K562 (cell line): ENCODE measurements at regions of chr1 and their contacts with region 1.

Region 1: DNA sequence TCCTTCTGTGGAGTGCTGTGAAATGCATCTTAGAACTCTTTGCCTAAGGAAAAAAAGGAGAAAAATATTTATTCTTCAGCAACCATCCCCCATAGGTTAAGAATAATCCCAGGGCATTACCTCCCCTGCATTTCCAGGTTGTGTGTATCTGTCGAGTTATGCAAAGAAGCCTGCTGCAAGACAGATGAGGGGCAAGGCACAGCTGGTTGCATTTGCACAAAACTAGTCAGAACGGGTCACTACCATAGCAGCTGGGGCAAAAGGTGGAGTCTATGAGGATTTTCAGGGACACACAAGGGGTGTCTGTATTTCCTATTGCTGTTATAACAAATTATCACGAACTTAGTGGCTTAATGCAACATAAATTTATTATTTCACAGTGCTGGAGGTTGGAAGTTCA is 443.4 kb upstream of the C1orf87 start:
- DNase-seq: no peak
- ATAC-seq: no peak
- H3K4me3 ChIP-seq: no peak overlapping the region
- H3K27ac ChIP-seq: no peak overlapping the region
- H3K4me1 ChIP-seq: no peaks in the 10 kb centered on the region
- H3K27me3 ChIP-seq: no peaks in the 10 kb centered on the region
- CTCF ChIP-seq: no peak
- EP300 ChIP-seq: no peak
- POLR2A ChIP-seq: no peak
- RAD21 ChIP-seq: no peak

Region 2: DNA sequence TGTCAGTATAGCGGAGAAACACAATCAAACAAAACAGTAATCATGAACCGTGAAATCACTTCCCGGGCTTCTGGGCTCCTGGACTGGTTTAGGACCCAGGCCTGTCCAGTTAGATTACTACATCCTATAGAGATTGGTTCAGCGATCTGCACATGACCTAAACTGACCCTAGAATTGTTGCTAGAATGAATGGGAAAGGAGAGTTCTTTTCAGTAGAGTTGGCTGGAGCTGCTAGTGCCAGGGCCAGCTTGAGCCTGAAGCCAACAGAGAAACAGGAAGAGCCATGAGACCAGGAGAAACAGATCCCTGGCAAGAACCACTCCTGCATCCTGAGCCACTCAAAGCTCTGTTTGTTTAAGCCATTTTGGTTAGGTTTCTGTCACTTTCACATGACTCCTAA is 30.8 kb after region 1 on chr1:
- CTCF ChIA-PET with region 1: no interaction called
- POLR2A ChIA-PET with region 1: no interaction called
- in situ Hi-C with region 1: no loop called
- intact Hi-C with region 1: loop called (anchors 1 kb)
- DNase-seq: no peak
- ATAC-seq: no peak
- H3K4me3 ChIP-seq: no peak overlapping the region
- H3K27ac ChIP-seq: no peak overlapping the region
- H3K4me1 ChIP-seq: no peaks in the 10 kb centered on the region
- H3K27me3 ChIP-seq: no peaks in the 10 kb centered on the region
- CTCF ChIP-seq: no peak
- EP300 ChIP-seq: no peak
- POLR2A ChIP-seq: no peak
- RAD21 ChIP-seq: no peak

Region 3: GRCh38 chr1:60573726-60574409 is 56.9 kb after region 1 on chr1:
- CTCF ChIA-PET with region 1: no interaction called
- POLR2A ChIA-PET with region 1: no interaction called
- in situ Hi-C with region 1: no loop called
- intact Hi-C with region 1: no loop called
- DNase-seq: no peak
- ATAC-seq: no peak
- H3K4me3 ChIP-seq: no peak overlapping the region
- H3K27ac ChIP-seq: no peak overlapping the region
- H3K4me1 ChIP-seq: no peaks in the 10 kb centered on the region; a peak in 1 of 5 replicates
- H3K27me3 ChIP-seq: no peaks in the 10 kb centered on the region
- CTCF ChIP-seq: no peak
- EP300 ChIP-seq: no peak
- POLR2A ChIP-seq: no peak
- RAD21 ChIP-seq: no peak